ENCODE measurements at regions of chr11 and their contacts with region 1.

Region 1: DNA sequence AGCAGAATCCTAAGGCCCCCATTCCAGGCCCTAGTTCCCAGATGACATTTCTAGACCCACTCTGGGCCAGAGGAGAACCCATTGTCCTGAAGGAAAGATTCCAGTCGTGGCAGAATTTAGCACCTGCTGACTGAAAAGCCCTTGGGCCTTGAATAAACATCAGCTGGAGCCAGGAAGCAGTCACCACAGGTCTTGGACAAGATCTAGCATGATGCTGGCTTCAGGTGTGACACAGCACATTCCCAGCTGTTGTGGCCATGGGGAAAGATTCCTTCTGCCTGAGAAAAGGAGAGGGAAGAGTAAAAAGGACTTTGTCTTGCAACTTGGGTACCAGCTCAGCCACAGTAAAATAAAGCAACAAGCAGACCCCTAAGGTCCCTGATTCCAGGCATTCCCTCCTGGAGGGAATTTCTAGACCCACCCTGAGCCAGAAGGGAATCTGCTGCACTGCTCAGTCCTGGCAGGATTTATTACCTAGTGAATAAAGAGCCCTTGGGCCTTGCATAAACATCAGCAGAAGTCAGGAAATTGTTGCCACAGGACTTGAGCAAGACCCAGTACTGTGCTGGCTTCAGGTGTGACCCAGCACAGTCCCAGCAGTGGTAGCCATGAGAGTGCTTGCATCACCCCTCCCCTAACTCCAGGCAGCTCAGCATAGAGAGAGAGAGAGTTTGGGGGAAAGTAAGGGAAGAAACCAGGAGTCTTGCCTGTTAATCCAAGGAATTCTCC is 42.5 kb upstream of the PAMR1 start:
- DNase-seq: no peak
- ATAC-seq: no peak
- H3K4me3 ChIP-seq: no peak overlapping the region
- H3K27ac ChIP-seq: no peak overlapping the region
- H3K4me1 ChIP-seq: peaks cover 1 to 12% of the 10 kb centered on the region in 2 donors
- H3K27me3 ChIP-seq: no peaks in the 10 kb centered on the region

Region 2: DNA sequence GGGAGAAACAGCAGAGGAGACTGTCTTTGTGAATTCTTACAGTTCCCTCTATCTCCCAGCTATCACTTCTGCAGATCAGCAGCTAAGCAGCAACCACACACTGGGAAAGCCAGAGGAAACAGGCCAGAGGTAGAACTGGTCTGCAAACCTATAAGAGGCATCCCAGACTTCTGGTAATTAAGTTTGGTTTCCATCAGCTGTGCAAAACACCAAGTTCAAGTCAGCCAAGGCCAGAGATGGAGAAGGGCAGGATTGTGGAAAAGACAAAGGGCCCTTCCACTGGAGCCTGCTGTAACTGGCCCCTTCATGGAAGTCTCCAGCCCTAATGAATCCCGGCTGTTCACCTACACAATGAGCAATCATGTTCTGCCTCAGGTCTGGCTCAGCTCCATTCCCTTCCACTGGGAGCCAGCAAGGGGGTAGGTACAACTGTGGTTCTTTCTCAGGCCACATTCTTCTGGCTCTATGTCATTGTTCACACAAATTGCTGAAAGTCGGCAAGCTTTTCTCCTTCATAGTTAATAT is 37.9 kb before region 1 on chr11:
- intact Hi-C with region 1: loop called in 1 of 2 experiments (anchors 2 kb)
- DNase-seq: peak in 1 of 2 donors; percentile 69
- ATAC-seq: peak; percentile 42
- H3K4me3 ChIP-seq: no peak overlapping the region
- H3K27ac ChIP-seq: peak overlapping the region in 1 of 2 donors; percentile 8
- H3K4me1 ChIP-seq: peaks cover 5 to 7% of the 10 kb centered on the region in 2 donors
- H3K27me3 ChIP-seq: no peaks in the 10 kb centered on the region

Region 3: DNA sequence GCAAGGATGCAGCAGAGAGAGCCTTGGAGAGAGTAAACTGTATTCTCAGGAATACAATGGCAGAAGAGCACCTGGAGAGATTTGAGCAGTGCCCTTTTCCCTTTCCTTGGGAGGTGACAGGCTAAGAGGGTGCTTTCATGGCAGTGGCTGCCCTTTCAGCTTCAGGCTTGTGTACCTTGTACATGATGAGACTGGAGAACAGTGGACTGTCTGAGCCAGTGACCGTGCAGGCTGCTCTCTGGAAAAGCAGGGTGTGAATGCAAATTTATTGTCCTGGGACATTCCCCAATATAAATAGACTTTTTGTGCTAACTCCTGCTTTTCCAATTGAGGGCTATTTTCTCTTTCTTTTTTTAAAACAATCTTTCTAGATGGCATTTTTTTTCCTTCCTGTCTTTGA is 194.0 kb after region 1 on chr11:
- intact Hi-C with region 1: no loop called
- DNase-seq: no peak
- ATAC-seq: no peak
- H3K4me3 ChIP-seq: no peak overlapping the region
- H3K27ac ChIP-seq: no peak overlapping the region
- H3K4me1 ChIP-seq: peaks cover 0 to 6% of the 10 kb centered on the region in 2 donors
- H3K27me3 ChIP-seq: no peaks in the 10 kb centered on the region

Region 4: GRCh38 chr11:36010010-36010740 is 442.3 kb after region 1 on chr11:
- intact Hi-C with region 1: loop called in 1 of 2 experiments (anchors 10 kb)
- DNase-seq: no peak
- ATAC-seq: no peak
- H3K4me3 ChIP-seq: no peak overlapping the region
- H3K27ac ChIP-seq: no peak overlapping the region
- H3K4me1 ChIP-seq: peaks cover 0 to 4% of the 10 kb centered on the region in 2 donors
- H3K27me3 ChIP-seq: no peaks in the 10 kb centered on the region